H1 (cell line): ENCODE measurements at regions of chr2 and their contacts with region 1.

Region 1: DNA sequence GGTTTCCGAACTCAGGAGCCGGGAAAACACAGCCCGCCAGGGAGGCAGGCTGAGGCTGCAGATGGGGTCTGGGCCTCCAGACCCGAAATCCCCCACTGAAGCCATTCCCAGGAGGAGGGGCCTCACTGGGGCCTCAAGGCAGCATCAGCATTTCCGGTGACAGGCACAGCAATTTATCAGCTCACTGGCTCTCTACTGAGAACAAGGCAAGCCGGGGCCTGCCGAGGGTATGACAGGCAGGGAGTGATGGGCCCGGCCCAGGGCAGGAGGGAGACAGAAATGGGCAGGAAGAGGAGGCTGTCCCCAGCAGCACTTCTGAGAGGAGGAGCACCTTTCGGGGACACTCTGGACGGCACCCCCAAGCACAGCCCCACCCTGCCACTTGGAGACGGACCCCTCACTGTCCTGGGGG is 12.5 kb downstream of the SDC1 start:
- DNase-seq: no peak
- H3K4me3 ChIP-seq: no peak overlapping the region
- H3K27ac ChIP-seq: no peak overlapping the region
- H3K4me1 ChIP-seq: peaks cover 0 to 26% (median 9%) of the 10 kb centered on the region in 4 experiments; a peak in 6 of 7 replicates
- H3K27me3 ChIP-seq: no peaks in the 10 kb centered on the region
- CTCF ChIP-seq: no peak
- EP300 ChIP-seq: no peak
- POLR2A ChIP-seq: no peak
- RAD21 ChIP-seq: no peak

Region 2: GRCh38 chr2:20186078-20186854 is 26.2 kb before region 1 on chr2:
- CTCF ChIA-PET with region 1: interaction called, 104 read pairs
- POLR2A ChIA-PET with region 1: no interaction called
- DNase-seq: no peak
- H3K4me3 ChIP-seq: no peak overlapping the region
- H3K27ac ChIP-seq: no peak overlapping the region
- H3K4me1 ChIP-seq: peaks cover 0 to 39% (median 21%) of the 10 kb centered on the region in 4 experiments; a peak in 6 of 7 replicates
- H3K27me3 ChIP-seq: no peaks in the 10 kb centered on the region; a peak in 3 of 7 replicates
- CTCF ChIP-seq: no peak
- EP300 ChIP-seq: no peak
- POLR2A ChIP-seq: no peak
- RAD21 ChIP-seq: no peak